ENCODE measurements at regions of chr10 and their contacts with region 1.

Region 1: DNA sequence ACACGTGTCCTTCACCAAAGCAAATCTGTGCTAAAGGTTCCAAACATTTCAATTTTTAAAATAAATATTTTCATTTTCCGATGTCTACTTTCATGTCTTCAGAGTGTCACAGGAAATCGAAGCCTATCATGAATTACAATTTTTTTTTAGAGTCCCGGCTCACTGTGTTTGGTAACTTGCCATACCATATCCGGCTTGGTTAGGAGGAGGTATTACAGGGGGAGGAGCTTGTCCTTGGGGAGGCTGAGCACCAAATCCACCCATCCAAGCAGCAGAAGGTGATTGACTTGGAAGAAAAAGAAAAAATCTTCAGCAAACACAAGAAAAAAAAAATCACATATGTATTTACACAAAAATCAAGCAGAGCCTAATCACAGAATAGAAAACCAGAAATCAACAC is 21.3 kb downstream of the TIAL1 start:
- DNase-seq: peak in 7 of 9 donors; percentile 46 to 76 (median 60)
- ATAC-seq: peak; percentile 86
- H3K4me3 ChIP-seq: no peak overlapping the region
- H3K4me3 Mint-ChIP-seq: peak overlapping the region in 7 of 10 donors; percentile 10 to 65 (median 27)
- H3K27ac ChIP-seq: peak overlapping the region; percentile 59
- H3K27ac Mint-ChIP-seq: peak overlapping the region; percentile 16 to 91 (median 70)
- H3K4me1 ChIP-seq: peaks cover 12 to 19% of the 10 kb centered on the region in 2 donors
- H3K4me1 Mint-ChIP-seq: peaks cover 8 to 29% (median 20%) of the 10 kb centered on the region in 7 donors
- H3K27me3 ChIP-seq: no peaks in the 10 kb centered on the region
- H3K27me3 Mint-ChIP-seq: no peaks in the 10 kb centered on the region

Region 2: GRCh38 chr10:119588071-119588470 is 12.6 kb after region 1 on chr10:
- CTCF ChIA-PET with region 1: no interaction called
- POLR2A ChIA-PET with region 1: interaction called, 14 read pairs
- intact Hi-C with region 1: loop called in 1 of 2 experiments (anchors 1 kb)
- DNase-seq: no peak
- ATAC-seq: no peak
- H3K4me3 ChIP-seq: no peak overlapping the region
- H3K4me3 Mint-ChIP-seq: no peak overlapping the region
- H3K27ac ChIP-seq: no peak overlapping the region
- H3K27ac Mint-ChIP-seq: no peak overlapping the region
- H3K4me1 ChIP-seq: peaks cover 15 to 27% of the 10 kb centered on the region in 2 donors
- H3K4me1 Mint-ChIP-seq: peaks cover 27 to 46% (median 40%) of the 10 kb centered on the region in 7 donors
- H3K27me3 ChIP-seq: no peaks in the 10 kb centered on the region
- H3K27me3 Mint-ChIP-seq: no peaks in the 10 kb centered on the region